ENCODE measurements at regions of chr3 and their contacts with region 1.

Region 1: GRCh38 chr3:50611464-50612233 is at the start of gene CISH:
- DNase-seq: no peak
- ATAC-seq: peak; percentile 88
- H3K4me3 ChIP-seq: peak within 1 kb of the TSS; percentile 85
- H3K27ac ChIP-seq: peak within 1 kb of the TSS; percentile 61
- H3K4me1 ChIP-seq: peaks cover 19% of the 10 kb centered on the region
- H3K27me3 ChIP-seq: no peaks in the 10 kb centered on the region
- CTCF ChIP-seq: peak; percentile 35 to 61 (median 52)
- EP300 ChIP-seq: no peak
- POLR2A ChIP-seq: peak; percentile 86
- RAD21 ChIP-seq: no peak
- polyA plus RNA-seq, gene CISH: 0.21 to 0.57 TPM

Region 2: GRCh38 chr3:50154840-50155474 is 456.7 kb before region 1 on chr3 and contains the start of gene SEMA3F:
- CTCF ChIA-PET with region 1: no interaction called
- POLR2A ChIA-PET with region 1: no interaction called
- RAD21 ChIA-PET with region 1: no interaction called
- SMC1A ChIA-PET with region 1: no interaction called
- in situ Hi-C with region 1: no loop called
- intact Hi-C with region 1: no loop called
- DNase-seq: no peak
- ATAC-seq: peak; percentile 92
- H3K4me3 ChIP-seq: peak within 1 kb of the TSS; percentile 57; the same call in 1 of the 2 replicates
- H3K27ac ChIP-seq: no peak within 1 kb of the TSS
- H3K4me1 ChIP-seq: no peaks in the 10 kb centered on the region; the same call in 1 of the 2 replicates
- H3K27me3 ChIP-seq: peaks cover 10 to 14% of the 10 kb centered on the region in 2 experiments
- CTCF ChIP-seq: no peak
- EP300 ChIP-seq: no peak
- POLR2A ChIP-seq: no peak
- RAD21 ChIP-seq: no peak
- polyA plus RNA-seq, gene SEMA3F: not detected

Region 3: DNA sequence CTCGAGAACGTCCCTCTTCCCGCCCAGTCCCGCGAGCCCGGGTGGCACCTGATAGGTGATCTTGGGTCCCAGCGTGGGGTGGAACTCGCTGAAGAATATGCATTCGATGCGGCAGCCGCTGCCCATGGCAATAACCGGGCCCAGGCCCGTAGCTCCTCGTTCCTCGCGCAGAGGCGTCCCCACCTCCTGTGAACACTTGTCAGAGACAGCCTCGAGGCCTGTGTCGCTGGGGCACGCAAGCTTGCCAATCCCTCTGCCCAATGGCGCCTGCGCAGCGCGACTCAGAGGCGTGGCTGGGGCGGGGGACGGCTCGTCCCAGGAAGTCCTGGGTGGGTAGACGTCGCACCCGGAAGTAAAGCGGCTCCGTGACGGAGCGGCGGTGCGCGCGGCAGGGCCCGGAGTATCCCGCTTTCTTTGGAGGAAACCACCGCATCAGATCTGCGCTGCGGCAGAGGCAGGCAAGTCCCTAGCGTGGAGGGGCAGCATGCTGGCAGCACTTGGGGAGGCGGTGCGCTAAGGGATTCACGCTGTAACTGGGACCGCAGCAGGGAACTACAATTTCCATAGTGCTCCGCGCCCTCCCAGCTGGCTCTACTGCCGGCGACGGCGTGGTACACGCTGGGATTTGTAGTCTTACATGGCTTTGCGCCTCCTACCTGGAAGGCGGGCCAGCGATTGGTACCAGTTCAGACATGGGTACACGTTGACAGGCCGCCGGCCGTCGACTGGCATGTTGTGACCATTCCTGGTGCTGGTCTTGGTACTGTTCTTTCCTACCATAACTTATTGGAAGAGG is 260.9 kb before region 1 on chr3 and contains the starts of genes CYB561D2 and NPRL2:
- CTCF ChIA-PET with region 1: interaction called, 5 read pairs
- POLR2A ChIA-PET with region 1: no interaction called
- RAD21 ChIA-PET with region 1: interaction called, 13 read pairs
- SMC1A ChIA-PET with region 1: interaction called, 3 read pairs
- in situ Hi-C with region 1: no loop called
- intact Hi-C with region 1: loop called (anchors 2 kb)
- DNase-seq: peak; percentile 89
- ATAC-seq: peak; percentile 95
- H3K4me3 ChIP-seq: peak within 1 kb of the TSS; percentile 83
- H3K27ac ChIP-seq: peak within 1 kb of the TSS; percentile 86
- H3K4me1 ChIP-seq: peaks cover 22% of the 10 kb centered on the region
- H3K27me3 ChIP-seq: no peaks in the 10 kb centered on the region
- CTCF ChIP-seq: no peak
- EP300 ChIP-seq: 0 out of 4 replicates have a peak, but pooled peaks of 1 of the 2 experiments have one; percentile 9
- POLR2A ChIP-seq: peak; percentile 96
- RAD21 ChIP-seq: no peak
- polyA plus RNA-seq, gene CYB561D2: 7.6 to 11.9 TPM
- polyA plus RNA-seq, gene NPRL2: 33.6 to 36.2 TPM

Region 4: GRCh38 chr3:50568947-50569749 is 42.5 kb before region 1 on chr3 and contains the start of gene HEMK1:
- CTCF ChIA-PET with region 1: interaction called, 410 read pairs
- POLR2A ChIA-PET with region 1: interaction called, 23 read pairs
- RAD21 ChIA-PET with region 1: interaction called, 244 read pairs
- SMC1A ChIA-PET with region 1: interaction called, 137 read pairs
- in situ Hi-C with region 1: no loop called
- intact Hi-C with region 1: loop called (anchors 1 kb)
- DNase-seq: peak; percentile 76
- ATAC-seq: peak; percentile 84
- H3K4me3 ChIP-seq: peak within 1 kb of the TSS; percentile 81
- H3K27ac ChIP-seq: peak within 1 kb of the TSS; percentile 91
- H3K4me1 ChIP-seq: peaks cover 13% of the 10 kb centered on the region
- H3K27me3 ChIP-seq: no peaks in the 10 kb centered on the region
- CTCF ChIP-seq: no peak
- EP300 ChIP-seq: 0 out of 4 replicates have a peak, but pooled peaks of 1 of the 2 experiments have one; percentile 15
- POLR2A ChIP-seq: peak; percentile 85
- RAD21 ChIP-seq: no peak
- polyA plus RNA-seq, gene HEMK1: 2.8 to 10.5 TPM

Region 5: DNA sequence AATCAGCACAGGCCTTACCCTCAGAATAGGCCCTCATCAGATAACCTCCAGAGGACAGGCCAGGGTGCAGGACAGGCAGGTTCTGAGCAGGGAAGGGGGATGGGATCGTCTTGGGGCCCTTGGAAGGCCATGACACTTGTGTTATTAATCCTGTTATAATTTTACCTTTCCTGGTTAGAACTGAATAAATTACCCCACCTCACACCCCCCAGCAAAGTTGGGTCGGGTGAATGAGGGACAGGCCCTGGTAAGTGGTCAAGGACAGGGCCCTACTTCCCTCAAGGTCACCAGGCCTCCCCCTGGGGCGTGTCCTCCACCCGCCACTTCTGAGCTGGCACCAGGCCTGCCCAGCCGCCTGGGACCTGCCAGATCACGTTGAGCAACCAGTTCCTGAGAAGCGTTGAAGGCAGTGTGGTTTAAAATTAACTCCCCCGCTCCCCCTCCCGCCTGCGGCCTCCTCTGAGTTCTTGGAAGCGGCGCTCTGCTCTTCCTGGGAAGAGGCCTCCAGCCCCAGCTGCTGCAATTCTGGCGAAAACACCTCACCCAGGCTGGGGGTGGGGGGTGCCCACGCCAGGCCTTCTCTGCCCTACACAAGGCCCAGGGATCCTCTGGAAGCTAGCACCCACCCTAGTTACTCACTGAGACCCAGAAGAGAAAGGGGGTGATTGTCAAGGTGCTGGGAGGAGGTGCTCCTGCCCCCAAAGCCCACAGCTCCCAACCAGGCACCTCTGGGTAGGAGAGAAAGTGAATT is 10.6 kb before region 1 on chr3:
- CTCF ChIA-PET with region 1: interaction called, 16 read pairs
- POLR2A ChIA-PET with region 1: interaction called, 14 read pairs
- RAD21 ChIA-PET with region 1: interaction called, 15 read pairs
- SMC1A ChIA-PET with region 1: interaction called, 11 read pairs
- in situ Hi-C with region 1: no loop called
- intact Hi-C with region 1: no loop called
- DNase-seq: no peak
- ATAC-seq: peak; percentile 92
- H3K4me3 ChIP-seq: no peak overlapping the region
- H3K27ac ChIP-seq: peak overlapping the region; percentile 37
- H3K4me1 ChIP-seq: peaks cover 21% of the 10 kb centered on the region
- H3K27me3 ChIP-seq: no peaks in the 10 kb centered on the region
- CTCF ChIP-seq: no peak
- EP300 ChIP-seq: no peak
- POLR2A ChIP-seq: no peak
- RAD21 ChIP-seq: no peak

Region 6: GRCh38 chr3:50971487-50971924 is 359.9 kb after region 1 on chr3:
- CTCF ChIA-PET with region 1: interaction called, 7 read pairs
- POLR2A ChIA-PET with region 1: no interaction called
- RAD21 ChIA-PET with region 1: interaction called, 3 read pairs
- SMC1A ChIA-PET with region 1: no interaction called
- in situ Hi-C with region 1: no loop called
- intact Hi-C with region 1: loop called (anchors 2 kb)
- DNase-seq: no peak
- ATAC-seq: peak; percentile 93
- H3K4me3 ChIP-seq: no peak overlapping the region
- H3K27ac ChIP-seq: no peak overlapping the region
- H3K4me1 ChIP-seq: no peaks in the 10 kb centered on the region
- H3K27me3 ChIP-seq: no peaks in the 10 kb centered on the region
- CTCF ChIP-seq: peak; percentile 88 to 96 (median 91)
- EP300 ChIP-seq: no peak
- POLR2A ChIP-seq: no peak
- RAD21 ChIP-seq: peak; percentile 84

Region 7: DNA sequence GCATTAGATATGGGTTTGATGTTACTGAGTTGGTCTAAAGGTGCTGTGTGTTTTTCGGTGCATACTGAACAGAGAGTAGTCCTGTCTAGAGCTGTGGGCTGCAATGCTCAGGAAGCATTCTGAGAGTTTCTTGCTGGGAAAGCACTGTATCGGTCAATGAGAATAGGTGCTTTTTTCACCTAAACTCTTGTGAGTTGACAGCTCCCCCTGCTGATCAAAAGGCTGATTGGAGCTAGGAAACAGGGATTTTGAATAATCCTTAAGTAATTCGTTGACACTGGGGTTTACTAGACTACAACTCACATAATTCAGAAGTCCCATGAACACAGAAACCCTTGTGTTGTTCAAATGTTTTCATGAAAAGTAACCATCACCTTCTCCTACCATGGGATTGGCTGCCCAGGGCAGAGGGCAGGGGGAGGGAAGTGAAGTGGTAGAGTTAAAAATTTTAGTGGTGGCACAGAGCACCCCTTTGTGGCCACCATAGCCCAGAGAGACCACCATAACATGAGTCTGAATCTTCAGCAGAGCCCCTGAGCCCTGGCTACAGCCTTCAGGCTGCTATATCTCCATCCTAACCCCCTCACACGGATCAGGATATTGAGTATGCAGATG is 760.4 kb after region 1 on chr3:
- CTCF ChIA-PET with region 1: interaction called, 44 read pairs
- POLR2A ChIA-PET with region 1: no interaction called
- RAD21 ChIA-PET with region 1: interaction called, 8 read pairs
- SMC1A ChIA-PET with region 1: interaction called, 10 read pairs
- in situ Hi-C with region 1: loop called (anchors 5 kb)
- intact Hi-C with region 1: loop called (anchors 1 kb)
- DNase-seq: no peak
- ATAC-seq: peak; percentile 85
- H3K4me3 ChIP-seq: no peak overlapping the region
- H3K27ac ChIP-seq: no peak overlapping the region
- H3K4me1 ChIP-seq: no peaks in the 10 kb centered on the region
- H3K27me3 ChIP-seq: no peaks in the 10 kb centered on the region; a peak in 1 of 4 replicates
- CTCF ChIP-seq: peak; percentile 62 to 72 (median 67)
- EP300 ChIP-seq: no peak
- POLR2A ChIP-seq: no peak
- RAD21 ChIP-seq: peak; percentile 84

Region 8: GRCh38 chr3:51391075-51391567 is 779.5 kb after region 1 on chr3 and contains the start of gene RBM15B:
- CTCF ChIA-PET with region 1: interaction called, 17 read pairs
- POLR2A ChIA-PET with region 1: no interaction called
- RAD21 ChIA-PET with region 1: interaction called, 6 read pairs
- SMC1A ChIA-PET with region 1: interaction called, 3 read pairs
- in situ Hi-C with region 1: no loop called
- intact Hi-C with region 1: no loop called
- DNase-seq: peak; percentile 80
- ATAC-seq: peak; percentile 96
- H3K4me3 ChIP-seq: peak within 1 kb of the TSS; percentile 83
- H3K27ac ChIP-seq: peak within 1 kb of the TSS; percentile 73
- H3K4me1 ChIP-seq: peaks cover 25% of the 10 kb centered on the region
- H3K27me3 ChIP-seq: no peaks in the 10 kb centered on the region
- CTCF ChIP-seq: peak; percentile 84 to 93 (median 93); a peak in 4 of 6 replicates
- EP300 ChIP-seq: 0 out of 4 replicates have a peak, but pooled peaks of 1 of the 2 experiments have one; percentile 12
- POLR2A ChIP-seq: peak; percentile 81
- RAD21 ChIP-seq: peak; percentile 44; the same call in 1 of the 2 replicates
- polyA plus RNA-seq, gene RBM15B: 2.4 to 3.0 TPM